Common myeloid progenitor, CD34-positive (primary cell): ENCODE measurements at regions of chr1 and their contacts with region 1.

Region 1: GRCh38 chr1:24847995-24848881 is 81.8 kb downstream of the RUNX3 start:
- DNase-seq: peak; percentile 98 to 99 (median 99)
- H3K4me3 ChIP-seq: peak overlapping the region; percentile 0 to 71 (median 57)
- H3K27ac ChIP-seq: peak overlapping the region in 1 of 2 experiments; percentile 58
- H3K4me1 ChIP-seq: peaks cover 18 to 62% (median 49%) of the 10 kb centered on the region in 4 experiments
- H3K27me3 ChIP-seq: no peaks in the 10 kb centered on the region

Region 2: DNA sequence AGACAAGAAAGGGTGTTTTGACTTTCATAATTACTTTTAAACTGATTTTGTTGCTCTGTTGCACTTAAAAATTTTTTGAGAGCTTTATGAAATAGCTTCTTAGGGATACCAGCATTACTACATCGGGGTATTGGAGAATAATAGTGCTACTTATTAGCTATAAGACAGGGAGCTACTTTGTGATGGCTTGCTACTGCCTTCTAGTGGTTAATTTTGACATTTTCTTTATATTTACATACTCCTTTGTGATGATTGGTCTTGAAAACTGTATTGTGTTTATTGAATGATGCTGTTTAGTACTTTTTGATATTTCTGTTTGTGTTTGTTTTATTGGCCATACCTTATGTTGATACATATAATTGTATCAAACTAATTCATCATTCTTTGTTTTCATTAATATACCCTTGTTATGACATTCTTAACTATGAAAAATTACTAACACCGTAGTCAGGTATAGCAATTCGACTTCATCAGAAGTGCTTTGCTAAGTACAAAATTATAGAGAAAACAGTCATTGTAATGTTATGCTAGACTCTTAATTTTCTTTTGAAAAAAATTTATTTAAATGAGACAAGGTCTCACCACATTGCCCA is 17.5 kb before region 1 on chr1:
- CTCF ChIA-PET with region 1: interaction called, 14 read pairs
- POLR2A ChIA-PET with region 1: no interaction called
- DNase-seq: peak; percentile 70 to 85 (median 80)
- H3K4me3 ChIP-seq: no peak overlapping the region
- H3K27ac ChIP-seq: no peak overlapping the region
- H3K4me1 ChIP-seq: peaks cover 0 to 5% (median 3%) of the 10 kb centered on the region in 4 experiments
- H3K27me3 ChIP-seq: no peaks in the 10 kb centered on the region

Region 3: DNA sequence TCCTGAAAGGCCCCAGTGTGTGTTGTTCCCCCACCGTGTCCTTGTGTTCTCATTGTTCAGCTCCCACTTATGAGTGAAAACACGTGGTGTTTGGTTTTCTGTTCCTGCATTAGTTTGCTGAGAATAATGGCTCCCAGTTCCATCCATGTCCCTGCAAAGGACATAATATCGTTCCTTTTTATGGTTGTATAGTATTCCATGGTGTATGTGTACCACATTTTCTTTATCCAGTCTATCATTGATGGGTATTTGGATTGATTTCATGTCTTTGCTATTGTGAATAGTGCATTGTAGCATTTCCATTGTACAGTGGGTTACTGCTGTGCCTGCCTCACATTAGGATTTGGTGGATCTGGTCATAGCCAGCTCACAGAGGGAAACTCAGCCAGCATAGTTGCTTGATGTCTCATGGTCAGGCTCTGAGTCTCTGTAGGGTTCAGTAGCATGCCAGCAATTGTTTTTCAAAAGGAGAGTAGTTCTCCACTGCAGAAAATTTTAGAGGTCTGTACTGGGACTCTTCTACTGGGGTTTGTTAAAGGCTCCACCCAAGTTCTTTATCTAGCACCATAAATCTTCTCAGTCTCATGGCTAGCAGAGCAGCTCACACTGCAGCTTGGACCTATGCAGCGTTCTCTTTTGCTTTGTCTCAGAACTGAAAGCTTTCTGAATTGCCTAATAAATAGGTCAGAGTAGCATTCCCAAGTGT is 40.9 kb after region 1 on chr1:
- CTCF ChIA-PET with region 1: interaction called, 14 read pairs
- POLR2A ChIA-PET with region 1: no interaction called
- DNase-seq: no peak
- H3K4me3 ChIP-seq: no peak overlapping the region
- H3K27ac ChIP-seq: no peak overlapping the region
- H3K4me1 ChIP-seq: no peaks in the 10 kb centered on the region
- H3K27me3 ChIP-seq: no peaks in the 10 kb centered on the region

Region 4: DNA sequence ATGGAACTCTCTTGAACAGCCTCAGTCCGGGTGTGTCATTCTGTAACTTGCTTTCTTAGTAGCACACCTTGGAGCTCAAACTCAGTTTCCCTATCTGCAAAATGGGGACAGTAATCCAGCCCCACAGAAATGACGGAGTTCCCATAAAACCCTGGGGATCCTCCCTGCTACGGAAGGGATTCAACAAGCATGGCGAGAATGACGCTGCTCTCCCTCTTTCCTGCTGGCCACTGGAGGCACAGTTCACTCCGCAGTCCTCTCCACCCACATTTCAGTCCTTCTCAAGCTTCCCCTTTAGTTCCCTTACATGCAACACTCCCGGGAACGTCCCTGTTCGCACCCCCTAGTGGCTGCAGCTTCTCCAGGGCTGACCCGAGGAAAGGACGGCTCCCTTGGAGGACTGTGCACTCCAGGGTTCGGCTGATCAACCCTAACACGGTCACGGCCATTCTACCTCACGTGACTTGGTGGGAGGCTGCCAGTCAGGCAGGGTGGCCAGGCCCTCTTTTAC is 61.2 kb after region 1 on chr1:
- CTCF ChIA-PET with region 1: interaction called, 12 read pairs
- POLR2A ChIA-PET with region 1: no interaction called
- DNase-seq: peak; percentile 62 to 73 (median 70)
- H3K4me3 ChIP-seq: no peak overlapping the region
- H3K27ac ChIP-seq: no peak overlapping the region
- H3K4me1 ChIP-seq: peaks cover 0 to 4% (median 2%) of the 10 kb centered on the region in 4 experiments
- H3K27me3 ChIP-seq: no peaks in the 10 kb centered on the region

Region 5: DNA sequence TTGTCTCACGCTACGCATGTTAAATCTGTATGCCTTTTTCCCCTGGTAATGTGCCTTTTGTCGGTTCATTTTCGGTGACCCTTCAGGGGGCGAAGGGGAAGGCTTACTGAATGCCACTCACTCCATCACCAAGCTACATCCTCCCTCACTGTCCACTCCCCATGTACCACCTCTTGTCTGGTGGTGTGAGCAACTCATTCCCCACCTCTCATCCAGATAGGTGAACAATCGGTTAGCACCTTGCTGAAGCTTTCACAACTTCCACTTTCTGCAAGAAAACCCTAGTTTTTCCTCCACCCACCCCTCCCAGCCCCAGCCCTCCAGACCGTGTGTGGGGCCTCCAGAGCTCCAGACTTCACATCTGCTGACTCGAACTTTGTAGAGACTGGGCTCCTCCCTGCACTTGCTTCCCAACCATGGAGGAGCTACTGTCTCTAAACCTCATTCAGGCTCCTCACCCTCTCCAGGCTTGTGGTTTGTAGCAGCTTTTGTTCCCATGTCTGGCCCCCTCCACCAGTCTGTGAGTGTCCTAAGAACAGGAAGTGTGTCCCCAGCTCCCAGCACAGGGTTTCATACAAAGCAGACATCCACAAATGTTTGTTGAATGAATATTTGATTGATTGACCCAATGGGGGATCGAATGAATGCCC is 130.3 kb after region 1 on chr1:
- CTCF ChIA-PET with region 1: no interaction called
- POLR2A ChIA-PET with region 1: no interaction called
- DNase-seq: peak in 2 of 3 donors; percentile 30 to 31
- H3K4me3 ChIP-seq: no peak overlapping the region
- H3K27ac ChIP-seq: no peak overlapping the region
- H3K4me1 ChIP-seq: peaks cover 0 to 34% (median 10%) of the 10 kb centered on the region in 4 experiments
- H3K27me3 ChIP-seq: no peaks in the 10 kb centered on the region

Region 6: DNA sequence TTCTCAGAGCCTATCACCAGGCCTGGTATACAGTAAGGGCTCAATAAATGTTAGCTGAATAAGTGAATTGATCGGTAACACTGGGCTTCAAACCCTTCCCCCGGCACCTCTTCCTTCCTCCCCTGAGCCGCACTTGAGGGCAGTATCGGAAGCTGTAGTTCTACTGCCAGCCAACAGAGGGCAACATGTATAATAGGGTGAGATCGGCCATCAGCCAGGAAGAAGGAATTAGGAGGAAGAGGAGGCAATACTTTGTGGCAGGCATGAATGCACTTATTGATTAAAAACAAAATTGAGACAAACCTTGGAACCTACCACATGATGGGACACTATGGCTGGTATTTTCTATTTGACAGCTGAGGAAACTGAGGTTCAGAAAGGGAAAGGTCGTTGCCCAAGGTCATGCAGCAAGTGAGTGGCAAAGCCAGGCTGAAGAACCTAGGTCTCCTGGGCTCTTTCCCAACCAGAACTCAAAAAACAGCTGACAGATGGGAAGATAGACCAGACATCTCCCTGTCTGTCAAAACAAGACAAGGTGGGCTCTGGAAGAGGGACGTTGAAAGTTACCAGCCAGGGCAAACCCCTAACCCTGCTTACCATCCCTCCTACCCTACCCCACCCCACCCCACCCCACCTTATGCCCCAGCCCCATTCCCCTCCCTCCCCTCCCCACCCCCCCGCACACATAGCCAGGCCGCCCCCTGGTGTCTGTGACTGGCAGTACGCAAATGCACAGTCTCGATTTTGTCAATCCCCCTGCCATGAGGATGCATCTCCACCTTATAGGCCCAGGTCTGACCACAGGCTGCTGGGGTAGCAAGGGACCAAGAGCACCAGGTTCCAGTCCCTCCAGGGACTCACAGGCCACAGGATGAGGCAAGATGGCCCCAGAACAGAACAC is 189.2 kb after region 1 on chr1:
- CTCF ChIA-PET with region 1: interaction called, 37 read pairs
- POLR2A ChIA-PET with region 1: interaction called, 3 read pairs
- DNase-seq: peak in 2 of 3 donors; percentile 74 to 75
- H3K4me3 ChIP-seq: no peak overlapping the region
- H3K27ac ChIP-seq: no peak overlapping the region
- H3K4me1 ChIP-seq: peaks cover 16 to 57% (median 54%) of the 10 kb centered on the region in 4 experiments
- H3K27me3 ChIP-seq: no peaks in the 10 kb centered on the region

Region 7: GRCh38 chr1:25204797-25205480 is 356.7 kb after region 1 on chr1:
- CTCF ChIA-PET with region 1: interaction called, 16 read pairs
- POLR2A ChIA-PET with region 1: no interaction called
- DNase-seq: peak; percentile 47 to 70 (median 65)
- H3K4me3 ChIP-seq: no peak overlapping the region
- H3K27ac ChIP-seq: no peak overlapping the region
- H3K4me1 ChIP-seq: no peaks in the 10 kb centered on the region
- H3K27me3 ChIP-seq: no peaks in the 10 kb centered on the region